Left colon (tissue), 2 donors: ENCODE measurements at regions of chr19 and their contacts with region 1.

Region 1: GRCh38 chr19:8252922-8253589 is 43.9 kb downstream of the CERS4 start:
- DNase-seq: peak; percentile 61 to 88
- ATAC-seq: peak; percentile 94

Region 2: GRCh38 chr19:8158411-8159074 is 94.5 kb before region 1 on chr19:
- intact Hi-C with region 1: loop called (anchors 2 to 10 kb)
- DNase-seq: peak in 1 of 2 donors; percentile 23
- ATAC-seq: peak; percentile 49

Region 3: GRCh38 chr19:8194528-8195267 is 58.4 kb before region 1 on chr19:
- intact Hi-C with region 1: no loop called
- DNase-seq: peak; percentile 39 to 43
- ATAC-seq: peak; percentile 48